Activated CD4-positive, alpha-beta T cell treated with anti-CD3 and anti-CD28 coated beads, Interleukin-2, amount 10 ng/mL, durations not matched to agents 24 days and 14 days (primary cell): ENCODE measurements at regions of chr14 and their contacts with region 1.

Region 1: DNA sequence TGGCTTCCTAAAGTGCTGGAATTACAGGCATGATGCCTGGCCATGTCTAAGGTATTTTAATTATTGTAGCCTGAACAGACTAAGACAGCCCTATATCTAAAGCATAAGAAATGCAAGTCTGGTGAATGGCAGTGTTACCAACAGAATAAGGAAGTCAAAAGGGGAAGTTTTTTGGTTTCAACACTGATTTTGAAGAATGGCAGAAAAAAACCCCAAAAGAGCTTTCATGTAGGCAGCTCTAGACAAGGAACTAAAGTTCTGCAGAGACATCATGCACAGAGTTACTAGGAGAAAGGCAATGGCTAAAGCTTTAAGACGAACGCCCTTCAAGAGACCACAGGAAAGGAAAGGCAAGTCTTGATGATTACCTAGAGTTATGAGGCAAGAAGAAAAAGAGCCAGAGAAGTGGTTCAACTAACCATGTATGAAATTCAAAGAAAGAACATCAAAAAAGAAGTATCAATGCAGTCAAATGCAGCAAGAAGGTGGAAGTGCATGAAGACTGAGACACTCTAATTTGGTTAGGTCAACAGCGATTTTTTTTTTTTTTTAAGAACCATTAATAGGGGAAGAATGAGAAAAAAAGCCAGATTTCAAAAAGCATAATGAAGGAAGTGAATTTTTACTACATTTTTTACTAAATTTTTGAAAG is 50.8 kb downstream of the RPS6KA5 start:
- DNase-seq: peak; percentile 76
- H3K4me3 Mint-ChIP-seq: peak overlapping the region; percentile 55
- H3K27ac Mint-ChIP-seq: peak overlapping the region; percentile 74
- H3K4me1 Mint-ChIP-seq: peaks cover 38% of the 10 kb centered on the region
- H3K27me3 Mint-ChIP-seq: no peaks in the 10 kb centered on the region

Region 2: GRCh38 chr14:90940318-90940962 is 69.2 kb before region 1 on chr14:
- intact Hi-C with region 1: no loop called
- DNase-seq: no peak
- H3K4me3 Mint-ChIP-seq: no peak overlapping the region
- H3K27ac Mint-ChIP-seq: no peak overlapping the region
- H3K4me1 Mint-ChIP-seq: peaks cover 5% of the 10 kb centered on the region
- H3K27me3 Mint-ChIP-seq: no peaks in the 10 kb centered on the region

Region 3: DNA sequence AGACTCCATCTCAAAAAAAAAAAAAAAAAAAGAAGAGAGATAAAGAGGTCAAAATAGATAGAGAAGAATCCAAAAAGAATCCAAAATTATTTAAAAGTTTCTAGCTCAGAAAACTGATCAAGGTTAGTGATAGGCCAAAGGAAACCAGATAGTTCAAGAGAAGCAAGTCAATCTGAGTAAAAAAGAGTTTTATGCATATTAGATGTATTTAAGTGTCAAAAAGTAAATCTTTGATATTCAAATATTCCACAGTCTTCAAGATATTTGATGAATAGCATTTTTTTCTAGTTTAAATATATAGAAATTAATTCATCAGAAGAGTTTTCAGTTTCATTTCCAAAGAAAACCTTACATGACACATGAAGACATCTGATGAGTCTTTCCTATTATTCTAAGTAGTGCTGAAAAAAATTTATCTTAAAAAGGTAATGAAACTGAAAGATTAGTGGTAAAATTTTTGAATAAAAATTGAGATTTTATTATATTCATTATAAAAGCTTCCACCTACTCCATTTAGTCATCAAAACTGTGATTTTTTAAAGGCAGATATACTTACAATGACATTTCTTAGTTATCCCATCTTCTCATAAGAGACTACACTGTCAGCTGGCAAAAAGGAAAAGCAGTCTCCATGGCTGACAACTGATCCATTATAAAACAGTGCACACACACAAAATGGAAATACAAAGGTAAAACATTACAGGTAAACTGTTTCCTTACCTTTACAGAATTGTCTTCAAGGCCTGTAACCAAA is 17.8 kb before region 1 on chr14:
- intact Hi-C with region 1: loop called (anchors 2 kb)
- DNase-seq: no peak
- H3K4me3 Mint-ChIP-seq: no peak overlapping the region
- H3K27ac Mint-ChIP-seq: peak overlapping the region; percentile 35
- H3K4me1 Mint-ChIP-seq: peaks cover 32% of the 10 kb centered on the region
- H3K27me3 Mint-ChIP-seq: no peaks in the 10 kb centered on the region

Region 4: GRCh38 chr14:91029456-91030217 is 20.0 kb after region 1 on chr14:
- intact Hi-C with region 1: no loop called
- DNase-seq: no peak
- H3K4me3 Mint-ChIP-seq: peak overlapping the region; percentile 69
- H3K27ac Mint-ChIP-seq: peak overlapping the region; percentile 84
- H3K4me1 Mint-ChIP-seq: peaks cover 50% of the 10 kb centered on the region
- H3K27me3 Mint-ChIP-seq: peaks cover 2% of the 10 kb centered on the region

Region 5: GRCh38 chr14:91047174-91047753 is 37.6 kb after region 1 on chr14:
- intact Hi-C with region 1: loop called (anchors 5 kb)
- DNase-seq: no peak
- H3K4me3 Mint-ChIP-seq: no peak overlapping the region
- H3K27ac Mint-ChIP-seq: no peak overlapping the region
- H3K4me1 Mint-ChIP-seq: peaks cover 31% of the 10 kb centered on the region
- H3K27me3 Mint-ChIP-seq: no peaks in the 10 kb centered on the region

Region 6: GRCh38 chr14:91573893-91574837 is 564.5 kb after region 1 on chr14:
- intact Hi-C with region 1: no loop called
- DNase-seq: peak; percentile 82
- H3K4me3 Mint-ChIP-seq: peak overlapping the region; percentile 86
- H3K27ac Mint-ChIP-seq: peak overlapping the region; percentile 70
- H3K4me1 Mint-ChIP-seq: peaks cover 15% of the 10 kb centered on the region
- H3K27me3 Mint-ChIP-seq: peaks cover 28% of the 10 kb centered on the region